ENCODE measurements at regions of chr4 and their contacts with region 1.

Region 1: GRCh38 chr4:86895692-86896488 is 3.7 kb upstream of the C4orf36 start:
- DNase-seq: peak; percentile 78
- H3K4me3 Mint-ChIP-seq: no peak overlapping the region
- H3K27ac Mint-ChIP-seq: no peak overlapping the region
- H3K4me1 Mint-ChIP-seq: peaks cover 2% of the 10 kb centered on the region
- H3K27me3 Mint-ChIP-seq: peaks cover 15% of the 10 kb centered on the region

Region 2: GRCh38 chr4:85909851-85910250 is 986.0 kb before region 1 on chr4:
- intact Hi-C with region 1: no loop called
- DNase-seq: no peak
- H3K4me3 Mint-ChIP-seq: no peak overlapping the region
- H3K27ac Mint-ChIP-seq: no peak overlapping the region
- H3K4me1 Mint-ChIP-seq: no peaks in the 10 kb centered on the region
- H3K27me3 Mint-ChIP-seq: no peaks in the 10 kb centered on the region

Region 3: GRCh38 chr4:86522349-86522748 is 373.5 kb before region 1 on chr4:
- intact Hi-C with region 1: loop called (anchors 1 kb)
- DNase-seq: no peak
- H3K4me3 Mint-ChIP-seq: no peak overlapping the region
- H3K27ac Mint-ChIP-seq: no peak overlapping the region
- H3K4me1 Mint-ChIP-seq: no peaks in the 10 kb centered on the region
- H3K27me3 Mint-ChIP-seq: peaks cover 27% of the 10 kb centered on the region